Head of caudate nucleus (tissue), 42 donors: ENCODE measurements at regions of chr2 and their contacts with region 1.

Region 1: DNA sequence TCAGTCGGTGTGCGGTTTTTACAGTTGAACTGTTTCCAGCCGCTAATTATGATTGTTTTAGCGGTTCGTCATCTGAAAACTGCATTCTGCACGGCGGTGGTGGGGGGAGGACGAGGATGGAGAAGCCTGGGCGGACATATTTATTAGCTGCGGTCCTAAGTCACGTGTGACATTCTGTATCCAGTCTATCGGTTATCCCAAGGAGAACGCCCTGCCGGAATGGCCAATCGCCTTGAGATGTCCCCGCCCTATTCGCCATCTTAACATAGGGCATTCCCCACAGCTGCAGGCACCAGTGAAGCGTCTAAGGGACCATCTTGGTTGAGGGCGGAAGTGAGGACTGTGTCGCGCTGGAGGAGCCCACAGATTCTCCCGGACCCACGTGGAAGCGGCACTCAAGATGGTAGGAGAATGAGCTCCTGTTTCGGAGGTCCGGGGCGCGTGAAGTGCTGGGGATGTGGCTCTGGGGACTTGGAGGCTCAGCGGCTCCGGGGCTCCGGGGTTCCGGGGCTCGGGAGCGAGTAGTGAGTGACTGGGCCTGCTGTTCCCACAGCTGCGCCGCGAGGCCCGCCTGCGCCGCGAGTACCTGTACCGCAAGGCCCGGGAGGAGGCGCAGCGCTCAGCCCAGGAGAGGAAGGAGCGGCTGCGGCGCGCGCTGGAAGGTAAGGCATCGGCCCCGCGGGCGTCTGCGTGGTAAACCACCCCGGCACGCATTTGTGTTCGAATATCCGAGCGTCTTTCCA is at the start of gene IMP4:
- DNase-seq: peak; percentile 93 to 100 (median 99)

Region 2: GRCh38 chr2:130181325-130181879 is 161.3 kb before region 1 on chr2 and contains the start of gene SMPD4:
- intact Hi-C with region 1: loop called (anchors 5 kb)
- DNase-seq: peak; percentile 88 to 98 (median 96)

Region 3: GRCh38 chr2:130241041-130241707 is 101.5 kb before region 1 on chr2:
- intact Hi-C with region 1: no loop called
- DNase-seq: no peak